PC-9 (cell line): ENCODE measurements at regions of chr1 and their contacts with region 1.

Region 1: GRCh38 chr1:205711104-205712020 is 31.1 kb upstream of the SLC45A3 start:
- DNase-seq: peak; percentile 41 to 65
- H3K4me3 ChIP-seq: no peak overlapping the region
- H3K27ac ChIP-seq: peak overlapping the region; percentile 52
- H3K4me1 ChIP-seq: no peaks in the 10 kb centered on the region
- H3K27me3 ChIP-seq: no peaks in the 10 kb centered on the region
- CTCF ChIP-seq: peak; percentile 95

Region 2: GRCh38 chr1:205396967-205397616 is 314.3 kb before region 1 on chr1:
- CTCF ChIA-PET with region 1: no interaction called
- POLR2A ChIA-PET with region 1: interaction called, 12 read pairs
- intact Hi-C with region 1: no loop called
- DNase-seq: peak; percentile 30 to 51
- H3K4me3 ChIP-seq: no peak overlapping the region
- H3K27ac ChIP-seq: no peak overlapping the region
- H3K4me1 ChIP-seq: no peaks in the 10 kb centered on the region
- H3K27me3 ChIP-seq: no peaks in the 10 kb centered on the region
- CTCF ChIP-seq: peak; percentile 89

Region 3: DNA sequence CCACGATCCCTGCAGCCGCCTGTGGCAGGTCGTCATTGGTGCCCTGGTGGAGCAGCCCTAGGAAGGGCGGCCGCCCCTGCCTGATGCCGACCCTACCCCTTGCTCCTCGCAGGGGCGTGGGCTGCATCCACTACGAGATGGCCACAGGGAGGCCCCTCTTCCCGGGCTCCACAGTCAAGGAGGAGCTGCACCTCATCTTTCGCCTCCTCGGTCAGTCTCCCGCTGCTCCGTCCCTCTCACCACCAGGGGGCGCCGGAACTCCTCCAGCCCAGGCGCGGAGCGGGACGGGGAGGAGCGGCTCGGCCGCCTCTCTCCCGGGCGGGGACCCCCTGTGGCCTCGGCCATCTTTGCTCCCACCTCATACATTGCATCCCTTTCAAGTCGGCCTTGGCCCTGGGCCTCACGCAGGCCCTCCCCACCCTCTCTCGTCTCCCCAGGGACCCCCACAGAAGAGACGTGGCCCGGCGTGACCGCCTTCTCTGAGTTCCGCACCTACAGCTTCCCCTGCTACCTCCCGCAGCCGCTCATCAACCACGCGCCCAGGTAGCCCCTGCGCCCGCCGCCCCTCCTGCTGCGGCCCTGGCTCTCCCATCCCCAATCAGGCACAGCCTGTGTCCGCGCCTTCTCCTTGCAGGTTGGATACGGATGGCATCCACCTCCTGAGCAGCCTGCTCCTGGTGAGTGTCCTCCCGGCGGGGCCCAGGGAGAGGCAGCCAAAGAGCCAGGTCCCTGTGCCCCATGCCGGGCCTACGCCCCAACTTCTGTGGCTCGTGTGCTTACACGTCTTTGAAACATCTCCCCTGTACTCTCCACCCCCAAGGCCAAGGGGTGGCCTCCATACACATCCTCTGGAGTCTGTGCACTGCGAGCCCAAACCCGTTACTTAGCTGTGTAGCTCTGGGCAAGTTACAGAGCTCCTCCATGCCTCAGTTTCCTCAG is 182.2 kb before region 1 on chr1:
- CTCF ChIA-PET with region 1: no interaction called
- POLR2A ChIA-PET with region 1: no interaction called
- intact Hi-C with region 1: loop called (anchors 5 kb)
- DNase-seq: peak; percentile 46 to 77
- H3K4me3 ChIP-seq: no peak overlapping the region
- H3K27ac ChIP-seq: no peak overlapping the region
- H3K4me1 ChIP-seq: no peaks in the 10 kb centered on the region
- H3K27me3 ChIP-seq: no peaks in the 10 kb centered on the region
- CTCF ChIP-seq: peak; percentile 90

Region 4: GRCh38 chr1:205591522-205592351 is 119.6 kb before region 1 on chr1:
- CTCF ChIA-PET with region 1: interaction called, 3 read pairs
- POLR2A ChIA-PET with region 1: interaction called, 30 read pairs
- intact Hi-C with region 1: loop called (anchors 2 kb)
- DNase-seq: peak; percentile 65 to 86
- H3K4me3 ChIP-seq: peak overlapping the region; percentile 30; the same call in 1 of the 2 replicates
- H3K27ac ChIP-seq: no peak overlapping the region
- H3K4me1 ChIP-seq: peaks cover 11% of the 10 kb centered on the region
- H3K27me3 ChIP-seq: no peaks in the 10 kb centered on the region
- CTCF ChIP-seq: peak; percentile 95

Region 5: DNA sequence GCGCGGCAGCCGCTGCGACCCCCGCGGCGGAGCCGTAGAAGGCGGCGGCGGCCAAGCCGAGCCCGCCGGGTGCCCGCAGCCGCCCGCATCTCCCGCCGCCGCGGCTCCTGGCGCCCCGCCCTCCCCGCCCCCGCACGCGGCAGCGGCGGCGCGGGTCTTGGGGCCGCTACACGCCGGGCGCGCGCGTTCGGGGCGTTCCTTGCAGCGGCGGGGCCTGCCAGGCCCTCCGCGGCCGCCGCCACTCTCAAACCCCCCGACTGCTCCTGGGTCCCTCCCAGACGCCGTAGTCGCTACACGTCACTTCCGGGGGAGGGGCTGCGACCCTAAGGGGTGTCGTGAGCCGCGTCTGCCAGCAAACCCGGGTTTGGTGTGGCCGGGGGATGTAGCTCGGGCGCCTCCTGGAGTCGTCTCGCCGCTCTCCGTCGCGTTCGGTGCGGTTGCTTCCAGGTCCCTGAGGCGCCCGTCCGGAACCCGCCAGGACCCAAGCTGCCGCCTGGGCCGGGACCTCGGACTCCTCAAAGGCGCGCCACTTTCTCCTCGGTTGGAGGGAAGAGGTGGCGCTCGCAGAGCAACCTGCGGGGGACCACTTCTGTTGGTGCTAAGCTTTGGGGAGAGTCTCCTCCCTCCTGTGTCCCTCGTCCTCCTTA is 79.5 kb before region 1 on chr1 and contains the start of gene ELK4:
- CTCF ChIA-PET with region 1: interaction called, 15 read pairs
- POLR2A ChIA-PET with region 1: no interaction called
- intact Hi-C with region 1: no loop called
- DNase-seq: peak; percentile 90 to 98
- H3K4me3 ChIP-seq: peak within 1 kb of the TSS; percentile 92
- H3K27ac ChIP-seq: peak within 1 kb of the TSS; percentile 84
- H3K4me1 ChIP-seq: peaks cover 22% of the 10 kb centered on the region
- H3K27me3 ChIP-seq: no peaks in the 10 kb centered on the region
- CTCF ChIP-seq: peak; percentile 63
- total RNA-seq, gene ELK4: 40.3 and 48.1 TPM in 2 replicates

Region 6: GRCh38 chr1:205664376-205665108 is 46.8 kb before region 1 on chr1:
- CTCF ChIA-PET with region 1: interaction called, 96 read pairs
- POLR2A ChIA-PET with region 1: no interaction called
- intact Hi-C with region 1: loop called (anchors 1 kb)
- DNase-seq: peak; percentile 81 to 95
- H3K4me3 ChIP-seq: peak overlapping the region; percentile 47; the same call in 1 of the 2 replicates
- H3K27ac ChIP-seq: peak overlapping the region; percentile 90
- H3K4me1 ChIP-seq: peaks cover 81% of the 10 kb centered on the region
- H3K27me3 ChIP-seq: no peaks in the 10 kb centered on the region
- CTCF ChIP-seq: no peak

Region 7: DNA sequence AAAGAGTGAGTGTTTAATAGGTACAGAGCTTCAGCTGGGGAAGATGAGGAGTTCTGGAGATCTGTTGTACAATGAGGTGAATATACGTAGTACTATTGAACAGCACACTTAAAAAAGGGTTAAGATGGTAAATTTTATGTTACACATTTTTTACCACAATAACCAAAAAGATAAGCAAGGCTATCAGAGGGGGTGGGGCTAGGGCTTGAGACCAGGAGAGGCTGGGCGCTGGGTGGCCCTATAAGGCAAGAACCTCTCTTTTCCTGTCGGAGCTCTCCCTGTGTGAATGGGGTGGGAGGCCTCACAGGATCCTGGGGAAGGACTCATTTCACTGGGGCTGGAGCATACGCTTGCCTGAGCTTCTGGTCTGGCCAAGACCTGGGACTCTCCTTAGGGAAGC is 92.6 kb after region 1 on chr1:
- CTCF ChIA-PET with region 1: no interaction called
- POLR2A ChIA-PET with region 1: interaction called, 14 read pairs
- intact Hi-C with region 1: no loop called
- DNase-seq: no peak
- H3K4me3 ChIP-seq: no peak overlapping the region
- H3K27ac ChIP-seq: no peak overlapping the region
- H3K4me1 ChIP-seq: no peaks in the 10 kb centered on the region
- H3K27me3 ChIP-seq: no peaks in the 10 kb centered on the region
- CTCF ChIP-seq: no peak